ENCODE measurements at regions of chr15 and their contacts with region 1.

Region 1: GRCh38 chr15:100671858-100672543 is 69.6 kb downstream of the ASB7 start:
- DNase-seq: peak in 1 of 3 donors; percentile 63
- ATAC-seq: peak; percentile 78 to 81
- H3K4me3 ChIP-seq: no peak overlapping the region
- H3K27ac ChIP-seq: no peak overlapping the region
- H3K4me1 ChIP-seq: no peaks in the 10 kb centered on the region
- H3K27me3 ChIP-seq: no peaks in the 10 kb centered on the region

Region 2: DNA sequence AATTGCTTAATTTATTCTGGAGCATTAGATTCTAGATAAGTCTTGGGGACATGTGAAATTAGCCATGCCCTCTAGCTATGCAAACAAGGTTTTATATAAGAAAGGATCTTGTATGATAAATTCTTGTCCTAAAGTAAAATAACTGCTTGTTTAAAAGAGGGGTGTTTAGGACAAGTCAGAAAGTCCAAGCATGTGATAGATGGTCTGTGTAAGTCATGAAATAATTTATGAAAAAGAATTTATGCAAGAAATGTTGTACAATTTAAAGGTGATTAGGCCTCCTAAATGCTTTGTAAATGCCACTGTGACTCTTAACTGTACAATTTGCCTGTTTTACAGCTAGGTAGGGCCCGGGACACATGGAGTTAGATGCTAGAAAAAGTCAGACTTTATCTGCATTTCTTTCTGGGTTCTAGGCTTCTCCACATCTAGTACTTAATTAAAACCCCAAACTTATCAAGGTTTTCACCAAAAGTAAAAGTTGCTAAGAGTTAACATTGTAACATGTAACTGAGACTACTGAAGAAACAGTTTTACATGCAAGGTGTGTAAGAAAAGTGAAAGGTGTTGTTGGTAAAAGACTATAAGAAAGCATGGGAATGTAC is 83.3 kb before region 1 on chr15:
- intact Hi-C with region 1: no loop called
- DNase-seq: no peak
- ATAC-seq: no peak
- H3K4me3 ChIP-seq: no peak overlapping the region
- H3K27ac ChIP-seq: no peak overlapping the region
- H3K4me1 ChIP-seq: no peaks in the 10 kb centered on the region
- H3K27me3 ChIP-seq: no peaks in the 10 kb centered on the region

Region 3: GRCh38 chr15:100642213-100642949 is 29.6 kb before region 1 on chr15:
- intact Hi-C with region 1: no loop called
- DNase-seq: no peak
- ATAC-seq: no peak
- H3K4me3 ChIP-seq: no peak overlapping the region
- H3K27ac ChIP-seq: no peak overlapping the region
- H3K4me1 ChIP-seq: no peaks in the 10 kb centered on the region
- H3K27me3 ChIP-seq: no peaks in the 10 kb centered on the region

Region 4: GRCh38 chr15:100721770-100722550 is 50.0 kb after region 1 on chr15:
- intact Hi-C with region 1: no loop called
- DNase-seq: peak; percentile 81 to 86 (median 81)
- ATAC-seq: peak; percentile 90 to 93
- H3K4me3 ChIP-seq: no peak overlapping the region
- H3K27ac ChIP-seq: peak overlapping the region; percentile 80
- H3K4me1 ChIP-seq: peaks cover 2% of the 10 kb centered on the region
- H3K27me3 ChIP-seq: no peaks in the 10 kb centered on the region

Region 5: DNA sequence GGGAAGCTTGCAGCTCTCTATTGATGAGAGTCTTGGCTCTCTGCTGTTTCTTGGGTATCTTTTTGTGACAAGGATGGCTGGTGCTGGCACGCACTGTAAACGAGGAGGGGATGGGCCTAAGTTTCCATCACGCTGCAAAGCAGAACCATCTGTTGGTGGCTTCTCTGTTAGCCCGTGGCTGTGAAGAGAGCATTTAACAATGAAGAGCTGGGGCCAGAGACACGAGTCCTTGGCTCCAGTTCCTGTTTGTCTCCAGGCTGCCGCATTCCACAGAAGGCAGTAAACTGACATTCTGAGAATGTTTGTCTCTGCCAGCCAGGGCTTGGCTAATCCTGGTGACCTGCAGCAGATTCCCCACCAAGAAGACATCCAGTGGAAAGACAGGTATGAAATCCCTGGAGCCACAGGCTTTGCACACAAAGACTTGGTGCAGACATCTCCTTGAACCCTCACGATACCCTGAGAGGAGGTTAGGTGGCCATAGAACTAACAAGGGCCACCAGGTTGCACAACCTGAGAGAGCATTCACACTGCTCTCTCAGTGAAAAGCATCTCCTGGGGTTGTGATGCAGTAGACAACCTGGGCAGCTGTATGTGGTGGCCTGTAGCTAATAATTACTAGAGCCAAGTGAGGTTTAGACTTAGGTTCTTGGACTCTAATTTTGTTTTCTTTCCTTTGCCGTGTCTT is 61.2 kb after region 1 on chr15:
- intact Hi-C with region 1: no loop called
- DNase-seq: no peak
- ATAC-seq: peak in 1 of 2 donors; percentile 33
- H3K4me3 ChIP-seq: no peak overlapping the region
- H3K27ac ChIP-seq: no peak overlapping the region
- H3K4me1 ChIP-seq: peaks cover 3% of the 10 kb centered on the region
- H3K27me3 ChIP-seq: no peaks in the 10 kb centered on the region

Region 6: DNA sequence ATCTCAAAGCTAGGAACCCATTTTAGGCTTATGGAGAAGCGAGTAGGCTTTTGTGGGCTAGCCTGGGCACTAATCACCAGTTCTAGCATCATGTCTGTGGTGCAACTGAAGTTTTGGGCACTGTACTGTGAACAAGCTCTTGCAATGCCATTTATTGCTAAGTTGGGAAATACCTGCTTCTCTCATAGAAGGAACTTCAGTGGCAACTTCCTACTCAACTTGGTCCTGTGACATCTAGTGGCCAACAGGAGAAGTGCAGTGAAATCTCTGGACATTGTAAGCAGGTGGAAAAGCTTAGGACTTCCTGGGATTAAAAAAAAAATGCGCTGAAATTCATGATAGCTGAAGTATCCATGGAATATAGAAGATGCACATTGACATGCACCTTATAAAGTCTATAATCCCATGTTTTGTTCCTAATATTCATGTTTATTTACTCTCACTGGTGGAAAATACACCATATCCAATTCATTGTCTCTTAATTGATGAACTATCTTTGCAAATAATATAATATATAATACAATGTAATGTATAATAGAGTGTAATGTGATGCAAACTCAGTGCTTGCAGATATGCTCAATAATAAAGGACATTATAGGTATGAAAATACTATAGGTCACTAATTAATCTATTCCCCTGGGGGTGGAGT is 201.2 kb after region 1 on chr15:
- intact Hi-C with region 1: loop called in 2 of 4 experiments (anchors 5 to 10 kb)
- DNase-seq: no peak
- ATAC-seq: peak; percentile 61 to 71
- H3K4me3 ChIP-seq: no peak overlapping the region
- H3K27ac ChIP-seq: no peak overlapping the region
- H3K4me1 ChIP-seq: no peaks in the 10 kb centered on the region
- H3K27me3 ChIP-seq: no peaks in the 10 kb centered on the region

Measured in right cardiac atrium (tissue), 5 donors.